ENCODE measurements at regions of chr2 and their contacts with region 1.

Region 1: GRCh38 chr2:101623031-101623521 is 74.4 kb upstream of the MAP4K4 start:
- DNase-seq: peak; percentile 89
- ATAC-seq: peak; percentile 86
- H3K4me3 ChIP-seq: peak overlapping the region; percentile 9 to 56 (median 16)
- H3K4me3 Mint-ChIP-seq: peak overlapping the region; percentile 62
- H3K27ac ChIP-seq: peak overlapping the region; percentile 75 to 88
- H3K27ac Mint-ChIP-seq: peak overlapping the region; percentile 80
- H3K4me1 ChIP-seq: peaks cover 42 to 57% of the 10 kb centered on the region in 2 donors
- H3K4me1 Mint-ChIP-seq: peaks cover 71% of the 10 kb centered on the region
- H3K27me3 ChIP-seq: no peaks in the 10 kb centered on the region
- H3K27me3 Mint-ChIP-seq: no peaks in the 10 kb centered on the region
- CTCF ChIP-seq: no peak

Region 2: DNA sequence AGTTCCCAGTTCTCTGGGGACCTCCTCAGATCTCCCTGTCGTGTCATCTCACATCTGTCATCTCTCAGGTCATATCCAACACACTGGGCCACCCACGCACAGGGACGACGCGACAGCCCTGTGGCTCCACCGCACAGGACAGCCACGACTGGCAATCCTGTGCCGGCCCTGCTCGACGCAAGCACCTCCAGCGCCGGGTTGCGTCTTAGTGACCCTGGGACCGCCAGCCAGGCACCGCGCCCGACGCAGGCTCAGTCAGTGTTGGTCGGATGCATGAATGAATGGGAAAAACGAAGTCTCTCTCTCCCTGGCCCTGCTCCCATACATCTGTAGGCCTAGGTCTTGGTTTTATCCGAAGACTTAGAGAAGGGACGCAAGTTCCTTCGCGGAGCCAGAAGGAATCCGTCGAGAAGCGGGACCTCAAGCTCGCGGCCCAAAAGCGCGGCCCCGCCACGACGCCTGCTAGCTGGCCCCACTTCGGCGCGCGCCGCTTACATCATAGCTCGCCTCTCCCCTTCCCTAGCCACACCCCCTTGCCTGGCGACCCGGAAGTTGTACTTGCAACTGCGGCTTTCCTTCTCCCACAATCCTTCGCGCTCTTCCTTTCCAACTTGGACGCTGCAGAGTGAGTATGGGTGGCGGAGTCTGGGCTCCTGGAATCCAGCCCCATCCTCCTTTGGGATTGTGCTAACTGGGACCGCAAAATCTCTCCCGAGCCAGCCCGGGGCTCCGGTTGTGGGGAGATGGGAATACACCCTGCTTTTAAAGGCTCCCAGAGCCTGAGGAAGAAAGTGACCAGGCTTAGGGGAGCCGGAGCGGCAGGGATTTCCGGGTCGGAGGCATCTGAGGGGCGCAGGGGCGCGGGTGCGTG is 621.1 kb before region 1 on chr2 and contains the start of gene RPL31:
- CTCF ChIA-PET with region 1: no interaction called
- POLR2A ChIA-PET with region 1: no interaction called
- intact Hi-C with region 1: loop called (anchors 5 kb)
- DNase-seq: peak; percentile 95
- ATAC-seq: peak; percentile 97
- H3K4me3 ChIP-seq: peak within 1 kb of the TSS; percentile 80 to 99 (median 92)
- H3K4me3 Mint-ChIP-seq: peak within 1 kb of the TSS; percentile 88
- H3K27ac ChIP-seq: peak within 1 kb of the TSS; percentile 84 to 91
- H3K27ac Mint-ChIP-seq: peak within 1 kb of the TSS; percentile 96
- H3K4me1 ChIP-seq: peaks cover 15 to 21% of the 10 kb centered on the region in 2 donors
- H3K4me1 Mint-ChIP-seq: peaks cover 40% of the 10 kb centered on the region
- H3K27me3 ChIP-seq: no peaks in the 10 kb centered on the region
- H3K27me3 Mint-ChIP-seq: no peaks in the 10 kb centered on the region
- CTCF ChIP-seq: no peak
- total RNA-seq, gene RPL31: 1,595 and 1,767 TPM in 2 replicates

Region 3: DNA sequence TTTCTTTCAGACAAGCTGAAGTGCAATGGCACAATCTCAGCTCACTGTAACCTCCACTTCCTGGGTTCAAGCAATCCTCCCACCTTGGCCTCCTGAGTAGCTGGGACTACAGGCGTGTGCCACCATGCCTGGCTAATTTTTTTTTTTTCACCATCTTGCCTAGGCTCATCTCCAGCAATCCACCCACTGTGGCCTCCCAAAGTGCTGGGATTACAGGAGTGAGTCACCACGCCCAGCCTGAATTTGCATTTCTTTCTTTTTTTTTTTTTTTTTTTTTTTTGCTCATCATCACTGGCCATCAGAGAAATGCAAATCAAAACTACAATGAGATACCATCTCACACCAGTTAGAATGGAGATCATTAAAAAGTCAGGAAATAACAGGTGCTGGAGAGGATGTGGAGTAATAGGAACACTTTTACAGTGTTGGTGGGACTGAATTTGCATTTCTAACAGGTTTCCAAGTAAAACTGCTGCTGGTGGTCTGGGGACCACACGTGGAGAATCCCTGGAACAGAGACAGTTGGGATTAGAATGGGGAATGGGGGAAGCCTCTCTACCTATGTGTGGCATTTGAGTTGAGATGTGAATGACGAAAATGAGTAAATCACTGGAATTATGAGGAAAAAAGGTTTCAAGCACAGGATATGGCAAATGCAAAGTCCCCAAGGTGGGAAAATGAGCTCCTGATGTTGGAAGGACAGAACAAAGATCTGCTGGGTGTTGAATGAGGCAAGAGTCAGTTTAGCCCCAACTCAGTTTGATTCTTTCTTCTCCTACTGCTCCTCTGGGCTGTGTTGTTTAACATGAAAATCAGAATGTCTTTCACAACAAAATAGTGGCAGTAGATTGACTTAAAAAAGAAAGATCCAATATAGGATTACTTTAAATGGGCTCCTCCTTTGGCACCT is 14.4 kb before region 1 on chr2:
- CTCF ChIA-PET with region 1: no interaction called
- POLR2A ChIA-PET with region 1: interaction called, 6 read pairs
- intact Hi-C with region 1: loop called (anchors 2 kb)
- DNase-seq: no peak
- ATAC-seq: no peak
- H3K4me3 ChIP-seq: no peak overlapping the region
- H3K4me3 Mint-ChIP-seq: no peak overlapping the region
- H3K27ac ChIP-seq: no peak overlapping the region
- H3K27ac Mint-ChIP-seq: no peak overlapping the region
- H3K4me1 ChIP-seq: peaks cover 15 to 25% of the 10 kb centered on the region in 2 donors
- H3K4me1 Mint-ChIP-seq: peaks cover 25% of the 10 kb centered on the region
- H3K27me3 ChIP-seq: no peaks in the 10 kb centered on the region
- H3K27me3 Mint-ChIP-seq: no peaks in the 10 kb centered on the region
- CTCF ChIP-seq: no peak

Region 4: GRCh38 chr2:101717071-101717845 is 94.2 kb after region 1 on chr2:
- CTCF ChIA-PET with region 1: no interaction called
- POLR2A ChIA-PET with region 1: no interaction called
- intact Hi-C with region 1: loop called (anchors 1 kb)
- DNase-seq: peak; percentile 93
- ATAC-seq: peak; percentile 85
- H3K4me3 ChIP-seq: peak overlapping the region in 4 of 5 experiments; percentile 5 to 52 (median 19)
- H3K4me3 Mint-ChIP-seq: peak overlapping the region; percentile 83
- H3K27ac ChIP-seq: peak overlapping the region; percentile 94 to 99
- H3K27ac Mint-ChIP-seq: peak overlapping the region; percentile 96
- H3K4me1 ChIP-seq: peaks cover 92 to 93% of the 10 kb centered on the region in 2 donors
- H3K4me1 Mint-ChIP-seq: peaks cover 83% of the 10 kb centered on the region
- H3K27me3 ChIP-seq: no peaks in the 10 kb centered on the region
- H3K27me3 Mint-ChIP-seq: no peaks in the 10 kb centered on the region
- CTCF ChIP-seq: no peak

Region 5: DNA sequence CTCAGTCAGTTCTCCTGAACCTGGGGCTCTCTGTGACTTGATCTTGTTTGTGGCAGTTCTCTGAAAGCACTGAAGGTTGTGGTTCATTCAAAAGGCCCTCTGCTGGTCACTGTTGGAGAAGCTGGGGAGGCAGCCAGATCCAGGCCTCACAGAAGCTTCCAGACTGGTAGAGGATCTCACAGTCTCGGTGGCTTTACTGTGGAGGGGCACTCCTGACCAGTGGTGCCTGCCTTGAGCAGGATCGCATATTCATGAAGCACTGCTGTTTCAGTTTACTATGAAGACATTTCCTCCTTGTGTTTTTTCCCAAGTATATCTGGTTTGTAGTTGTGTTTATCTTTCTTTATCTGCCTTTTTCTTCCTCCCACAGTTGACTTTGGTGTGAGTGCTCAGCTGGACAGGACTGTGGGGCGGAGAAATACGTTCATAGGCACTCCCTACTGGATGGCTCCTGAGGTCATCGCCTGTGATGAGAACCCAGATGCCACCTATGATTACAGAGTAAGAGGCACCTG is 208.3 kb after region 1 on chr2:
- CTCF ChIA-PET with region 1: interaction called, 14 read pairs
- POLR2A ChIA-PET with region 1: no interaction called
- intact Hi-C with region 1: no loop called
- DNase-seq: peak; percentile 75
- ATAC-seq: peak; percentile 86
- H3K4me3 ChIP-seq: no peak overlapping the region
- H3K4me3 Mint-ChIP-seq: no peak overlapping the region
- H3K27ac ChIP-seq: no peak overlapping the region
- H3K27ac Mint-ChIP-seq: peak overlapping the region; percentile 33
- H3K4me1 ChIP-seq: peaks cover 18 to 26% of the 10 kb centered on the region in 2 donors
- H3K4me1 Mint-ChIP-seq: peaks cover 52% of the 10 kb centered on the region
- H3K27me3 ChIP-seq: no peaks in the 10 kb centered on the region
- H3K27me3 Mint-ChIP-seq: no peaks in the 10 kb centered on the region
- CTCF ChIP-seq: peak; percentile 73